Panc1 (cell line): ENCODE measurements at regions of chr3 and their contacts with region 1.

Region 1: GRCh38 chr3:117278424-117279190 is 569.0 kb downstream of the TUSC7 start:
- DNase-seq: peak; percentile 41
- ATAC-seq: peak; percentile 92
- H3K4me3 ChIP-seq: no peak overlapping the region
- H3K27ac ChIP-seq: no peak overlapping the region
- H3K4me1 ChIP-seq: no peaks in the 10 kb centered on the region
- H3K27me3 ChIP-seq: no peaks in the 10 kb centered on the region
- CTCF ChIP-seq: no peak

Region 2: DNA sequence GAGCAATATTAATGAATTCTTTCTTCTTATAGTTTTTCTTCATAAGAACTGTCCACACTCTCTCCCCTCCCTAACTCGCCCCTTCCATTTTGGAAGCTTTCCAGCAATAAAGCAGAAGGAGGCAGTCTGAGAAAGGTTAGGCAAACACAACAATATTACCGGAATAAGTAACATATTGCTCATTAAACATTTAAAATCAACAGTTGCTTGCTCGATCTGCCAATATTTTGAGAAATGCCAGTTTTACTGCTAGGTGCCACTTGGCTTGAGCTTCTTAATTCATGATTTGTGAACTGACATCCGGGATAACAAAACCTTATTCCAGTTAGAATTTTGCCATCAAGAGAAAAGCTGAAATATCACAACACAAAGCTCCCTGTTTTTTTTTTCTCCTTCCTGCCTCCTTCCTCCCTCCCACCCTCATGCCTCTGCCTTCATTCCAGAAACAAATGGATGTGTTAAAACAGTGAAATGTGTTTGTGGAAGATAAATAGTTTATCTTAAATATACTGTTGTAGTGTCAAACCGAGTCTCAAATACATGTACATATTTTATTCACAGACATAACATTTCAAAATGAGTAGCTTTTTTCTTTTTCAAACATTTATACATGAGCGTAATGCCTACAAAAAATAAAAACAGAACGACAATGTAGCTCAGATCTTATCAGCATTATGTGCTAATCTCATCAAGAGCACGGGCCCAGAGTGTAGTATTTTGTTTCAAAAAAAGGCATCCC is 1401.6 kb before region 1 on chr3:
- CTCF ChIA-PET with region 1: no interaction called
- POLR2A ChIA-PET with region 1: interaction called, 10 read pairs
- in situ Hi-C with region 1: no loop called
- intact Hi-C with region 1: no loop called
- DNase-seq: no peak
- ATAC-seq: no peak
- H3K4me3 ChIP-seq: no peak overlapping the region
- H3K27ac ChIP-seq: no peak overlapping the region
- H3K4me1 ChIP-seq: no peaks in the 10 kb centered on the region
- H3K27me3 ChIP-seq: no peaks in the 10 kb centered on the region
- CTCF ChIP-seq: no peak

Region 3: GRCh38 chr3:117291476-117291875 is 12.9 kb after region 1 on chr3:
- CTCF ChIA-PET with region 1: no interaction called
- POLR2A ChIA-PET with region 1: no interaction called
- in situ Hi-C with region 1: no loop called
- intact Hi-C with region 1: no loop called
- DNase-seq: no peak
- ATAC-seq: no peak
- H3K4me3 ChIP-seq: no peak overlapping the region
- H3K27ac ChIP-seq: no peak overlapping the region
- H3K4me1 ChIP-seq: no peaks in the 10 kb centered on the region
- H3K27me3 ChIP-seq: no peaks in the 10 kb centered on the region
- CTCF ChIP-seq: no peak